ENCODE measurements at regions of chr11 and their contacts with region 1.

Region 1: DNA sequence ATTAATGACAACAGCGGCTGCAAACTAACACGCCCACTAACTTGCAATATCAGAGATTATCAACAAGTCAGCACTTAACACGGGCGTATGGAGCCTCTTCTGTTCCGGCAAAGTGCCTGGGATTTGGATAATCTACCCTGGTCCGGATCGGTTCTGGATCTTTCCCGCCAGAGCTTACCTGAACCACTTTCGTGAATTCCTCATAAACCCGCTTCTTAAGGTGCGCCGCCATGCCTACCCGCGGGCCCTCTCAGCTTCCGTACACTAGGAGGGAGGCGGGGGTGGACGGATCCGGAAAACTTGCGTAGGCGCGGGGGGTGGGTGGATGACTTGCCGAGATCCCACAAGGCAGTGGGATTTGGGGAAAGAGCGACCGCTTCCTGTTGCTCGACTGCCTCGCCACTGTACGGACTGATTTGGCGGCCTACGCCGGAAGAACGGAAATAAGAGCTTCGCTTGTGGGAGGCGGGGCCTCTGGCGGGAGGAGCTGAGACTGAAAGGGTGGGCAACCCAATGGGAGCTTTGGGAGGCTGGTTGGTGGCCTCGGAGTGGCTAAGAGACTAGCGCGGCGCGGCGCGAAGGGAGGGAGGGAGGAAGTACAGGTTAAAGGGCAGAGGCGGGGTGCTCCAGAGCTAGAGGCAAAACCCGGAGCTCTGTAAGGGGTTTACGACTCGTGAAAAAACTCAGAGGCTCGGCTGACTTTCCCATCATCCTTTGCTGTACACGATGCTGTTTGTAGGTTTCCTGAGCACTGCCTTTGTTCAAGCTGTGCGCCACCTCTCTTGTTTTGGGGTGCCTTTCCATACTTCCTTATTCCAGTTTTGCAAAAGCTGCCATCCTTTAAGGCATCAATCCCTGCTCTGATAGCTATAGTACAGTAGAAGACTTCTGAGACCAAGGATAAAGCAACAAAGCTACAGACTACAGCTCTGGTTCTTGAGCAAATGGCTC is at the start of gene INTS4:
- DNase-seq: peak; percentile 100
- H3K4me3 ChIP-seq: peak within 1 kb of the TSS; percentile 74
- H3K4me3 Mint-ChIP-seq: peak within 1 kb of the TSS; percentile 98
- H3K27ac Mint-ChIP-seq: peak within 1 kb of the TSS; percentile 82
- H3K4me1 ChIP-seq: peaks cover 12% of the 10 kb centered on the region
- H3K4me1 Mint-ChIP-seq: peaks cover 12% of the 10 kb centered on the region
- H3K27me3 ChIP-seq: no peaks in the 10 kb centered on the region
- H3K27me3 Mint-ChIP-seq: no peaks in the 10 kb centered on the region
- CTCF ChIP-seq: peak in 1 of 2 experiments; percentile 5
- total RNA-seq, gene INTS4: 86.7 and 88.7 TPM in 2 replicates

Region 2: GRCh38 chr11:77630157-77630710 is 364.5 kb before region 1 on chr11:
- CTCF ChIA-PET with region 1: no interaction called
- POLR2A ChIA-PET with region 1: interaction called, 11 read pairs
- intact Hi-C with region 1: no loop called
- DNase-seq: no peak
- H3K4me3 ChIP-seq: no peak overlapping the region
- H3K4me3 Mint-ChIP-seq: no peak overlapping the region
- H3K27ac Mint-ChIP-seq: no peak overlapping the region
- H3K4me1 ChIP-seq: no peaks in the 10 kb centered on the region
- H3K4me1 Mint-ChIP-seq: peaks cover 7% of the 10 kb centered on the region
- H3K27me3 ChIP-seq: no peaks in the 10 kb centered on the region
- H3K27me3 Mint-ChIP-seq: no peaks in the 10 kb centered on the region
- CTCF ChIP-seq: no peak

Region 3: DNA sequence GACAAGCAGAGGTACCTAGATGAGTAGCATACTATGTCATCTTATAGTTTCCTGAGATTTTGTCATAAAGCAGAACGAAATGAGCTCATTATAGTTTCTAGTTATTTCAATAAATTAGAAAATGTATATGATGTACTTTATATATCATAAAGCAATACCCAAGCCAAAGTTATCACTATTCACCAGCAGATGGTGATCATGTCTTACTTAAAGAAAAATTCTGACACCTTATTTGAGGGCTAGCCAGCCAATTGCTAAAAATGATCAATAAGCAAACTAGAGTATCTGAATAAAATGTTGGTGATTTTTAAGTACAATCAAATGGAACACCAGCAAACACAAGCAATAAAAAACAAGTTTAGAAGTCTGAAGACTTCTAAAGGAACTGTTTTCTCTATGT is 218.2 kb before region 1 on chr11:
- CTCF ChIA-PET with region 1: interaction called, 11 read pairs
- POLR2A ChIA-PET with region 1: interaction called, 9 read pairs
- intact Hi-C with region 1: no loop called
- DNase-seq: peak in 1 of 2 experiments; percentile 46
- H3K4me3 ChIP-seq: no peak overlapping the region
- H3K4me3 Mint-ChIP-seq: no peak overlapping the region
- H3K27ac Mint-ChIP-seq: no peak overlapping the region
- H3K4me1 ChIP-seq: peaks cover 21% of the 10 kb centered on the region
- H3K4me1 Mint-ChIP-seq: peaks cover 34% of the 10 kb centered on the region
- H3K27me3 ChIP-seq: no peaks in the 10 kb centered on the region
- H3K27me3 Mint-ChIP-seq: no peaks in the 10 kb centered on the region
- CTCF ChIP-seq: peak; percentile 49 to 73

Region 4: GRCh38 chr11:77820563-77821348 is 173.9 kb before region 1 on chr11 and contains the starts of genes AAMDC and RSF1:
- CTCF ChIA-PET with region 1: interaction called, 5 read pairs
- POLR2A ChIA-PET with region 1: interaction called, 12 read pairs
- intact Hi-C with region 1: loop called (anchors 1 kb)
- DNase-seq: peak; percentile 100
- H3K4me3 ChIP-seq: peak within 1 kb of the TSS; percentile 100
- H3K4me3 Mint-ChIP-seq: peak within 1 kb of the TSS; percentile 84
- H3K27ac Mint-ChIP-seq: peak within 1 kb of the TSS; percentile 77
- H3K4me1 ChIP-seq: peaks cover 36% of the 10 kb centered on the region
- H3K4me1 Mint-ChIP-seq: peaks cover 6% of the 10 kb centered on the region
- H3K27me3 ChIP-seq: no peaks in the 10 kb centered on the region
- H3K27me3 Mint-ChIP-seq: no peaks in the 10 kb centered on the region
- CTCF ChIP-seq: peak; percentile 72 to 92
- total RNA-seq, gene AAMDC: 87.7 and 89.7 TPM in 2 replicates
- total RNA-seq, gene RSF1: 108 and 121 TPM in 2 replicates

Region 5: GRCh38 chr11:78039919-78040671 is 45.4 kb after region 1 on chr11:
- CTCF ChIA-PET with region 1: interaction called, 10 read pairs
- POLR2A ChIA-PET with region 1: interaction called, 6 read pairs
- intact Hi-C with region 1: no loop called
- DNase-seq: no peak
- H3K4me3 ChIP-seq: no peak overlapping the region
- H3K4me3 Mint-ChIP-seq: no peak overlapping the region
- H3K27ac Mint-ChIP-seq: no peak overlapping the region
- H3K4me1 ChIP-seq: no peaks in the 10 kb centered on the region
- H3K4me1 Mint-ChIP-seq: peaks cover 15% of the 10 kb centered on the region
- H3K27me3 ChIP-seq: no peaks in the 10 kb centered on the region
- H3K27me3 Mint-ChIP-seq: no peaks in the 10 kb centered on the region
- CTCF ChIP-seq: no peak

Region 6: DNA sequence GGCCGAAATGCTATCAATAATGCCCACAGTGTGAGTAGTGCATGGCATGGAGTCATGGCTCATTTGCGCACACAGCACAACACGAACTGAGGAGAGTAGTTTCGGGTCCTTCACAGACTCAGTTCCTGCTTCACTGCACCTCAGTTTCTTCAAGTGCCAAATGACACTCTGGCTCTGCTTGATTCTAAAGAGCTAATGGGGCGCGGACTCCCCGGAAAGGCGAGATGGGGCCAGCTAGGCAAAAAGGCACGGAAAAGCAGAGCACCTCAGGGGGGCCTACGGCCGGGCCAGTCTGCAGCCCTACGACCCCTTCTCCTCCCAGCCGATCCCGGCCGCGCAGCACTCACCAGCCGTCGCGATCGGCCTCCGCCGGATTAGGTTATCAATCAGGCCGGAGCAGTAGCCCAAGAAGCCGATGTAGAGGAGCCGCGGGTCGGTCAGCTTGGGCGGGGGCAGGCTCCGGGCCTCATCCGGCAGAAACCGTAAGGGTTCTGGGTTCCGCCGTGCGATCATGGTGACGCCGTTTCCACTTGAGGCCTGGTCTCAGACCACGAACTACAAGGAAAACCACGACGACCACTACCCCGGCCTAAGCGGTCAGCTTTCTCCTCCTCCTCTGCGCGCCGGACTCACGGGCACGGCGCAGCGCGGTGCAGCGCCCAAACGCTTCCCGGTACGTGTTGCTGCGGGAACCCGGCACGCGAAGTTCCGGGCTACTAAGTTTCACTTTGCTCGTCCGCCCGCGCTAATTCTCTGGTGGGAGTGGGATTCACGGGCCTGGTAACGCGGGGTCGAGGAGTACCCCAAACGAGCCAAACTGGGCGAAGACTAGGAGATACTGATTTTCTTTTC is 84.8 kb after region 1 on chr11 and contains the start of gene NDUFC2:
- CTCF ChIA-PET with region 1: interaction called, 3 read pairs
- POLR2A ChIA-PET with region 1: interaction called, 10 read pairs
- intact Hi-C with region 1: no loop called
- DNase-seq: peak; percentile 87
- H3K4me3 ChIP-seq: peak within 1 kb of the TSS; percentile 73
- H3K4me3 Mint-ChIP-seq: peak within 1 kb of the TSS; percentile 76
- H3K27ac Mint-ChIP-seq: peak within 1 kb of the TSS; percentile 52
- H3K4me1 ChIP-seq: peaks cover 49% of the 10 kb centered on the region
- H3K4me1 Mint-ChIP-seq: peaks cover 37% of the 10 kb centered on the region
- H3K27me3 ChIP-seq: no peaks in the 10 kb centered on the region
- H3K27me3 Mint-ChIP-seq: no peaks in the 10 kb centered on the region
- CTCF ChIP-seq: no peak
- total RNA-seq, gene NDUFC2: 732 and 805 TPM in 2 replicates

Region 7: DNA sequence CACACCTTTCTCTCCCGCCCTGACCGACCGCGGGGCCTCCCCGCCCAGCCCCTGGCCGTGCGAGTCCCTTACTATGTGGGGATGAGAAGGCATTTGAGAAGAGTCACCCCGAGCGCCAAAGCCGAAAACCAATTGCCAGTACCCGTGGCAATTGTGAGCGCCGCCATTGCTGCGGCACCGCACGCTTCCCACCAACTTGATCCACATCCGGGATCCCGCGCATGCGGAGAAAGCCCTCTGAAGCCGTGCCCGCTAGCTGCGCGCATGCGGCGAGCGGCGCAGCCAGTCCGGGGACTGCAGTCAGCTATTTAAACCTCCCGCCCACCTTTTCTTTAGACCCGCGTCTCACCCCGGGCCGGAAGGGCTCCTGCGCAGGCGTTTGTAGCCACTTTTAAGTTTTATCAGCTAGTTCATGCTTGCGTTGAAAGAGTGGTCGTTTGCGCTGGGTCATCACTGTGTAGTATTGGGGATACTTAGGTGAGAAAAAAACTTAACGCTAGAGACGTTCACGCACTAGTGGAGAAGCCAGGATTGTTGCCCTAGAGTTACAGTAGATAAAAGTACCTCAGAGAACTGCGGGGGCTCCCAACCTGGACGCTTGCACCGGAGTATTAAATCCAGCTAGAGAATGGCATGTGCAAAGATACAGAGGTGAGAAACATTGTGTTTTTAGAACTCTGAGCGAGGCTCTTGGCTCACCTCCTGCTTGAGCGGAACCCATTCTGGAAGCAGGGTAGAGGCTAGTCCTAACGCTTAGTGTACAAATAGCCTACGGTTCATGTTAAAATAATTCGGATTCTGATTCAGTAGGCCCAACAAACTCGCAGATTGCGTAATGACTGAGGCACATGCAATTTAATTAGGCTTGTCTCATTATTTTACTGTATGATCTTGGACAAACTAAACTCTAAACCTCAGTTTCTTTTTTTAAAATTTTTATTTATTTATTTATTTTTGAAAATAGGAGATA is 145.0 kb after region 1 on chr11 and contains the start of gene ALG8:
- CTCF ChIA-PET with region 1: no interaction called
- POLR2A ChIA-PET with region 1: interaction called, 26 read pairs
- intact Hi-C with region 1: no loop called
- DNase-seq: peak; percentile 99
- H3K4me3 ChIP-seq: peak within 1 kb of the TSS; percentile 49
- H3K4me3 Mint-ChIP-seq: peak within 1 kb of the TSS; percentile 90
- H3K27ac Mint-ChIP-seq: peak within 1 kb of the TSS; percentile 83
- H3K4me1 ChIP-seq: peaks cover 5% of the 10 kb centered on the region
- H3K4me1 Mint-ChIP-seq: peaks cover 21% of the 10 kb centered on the region
- H3K27me3 ChIP-seq: no peaks in the 10 kb centered on the region
- H3K27me3 Mint-ChIP-seq: no peaks in the 10 kb centered on the region
- CTCF ChIP-seq: no peak
- total RNA-seq, gene ALG8: 188 and 191 TPM in 2 replicates

Measured in Caco-2 (cell line).